Activated CD4-positive, alpha-beta T cell treated with anti-CD3 and anti-CD28 coated beads, Interleukin-2, amount 10 ng/mL, durations not matched to agents 24 days and 14 days (primary cell): ENCODE measurements at regions of chr1 and their contacts with region 1.

Region 1: DNA sequence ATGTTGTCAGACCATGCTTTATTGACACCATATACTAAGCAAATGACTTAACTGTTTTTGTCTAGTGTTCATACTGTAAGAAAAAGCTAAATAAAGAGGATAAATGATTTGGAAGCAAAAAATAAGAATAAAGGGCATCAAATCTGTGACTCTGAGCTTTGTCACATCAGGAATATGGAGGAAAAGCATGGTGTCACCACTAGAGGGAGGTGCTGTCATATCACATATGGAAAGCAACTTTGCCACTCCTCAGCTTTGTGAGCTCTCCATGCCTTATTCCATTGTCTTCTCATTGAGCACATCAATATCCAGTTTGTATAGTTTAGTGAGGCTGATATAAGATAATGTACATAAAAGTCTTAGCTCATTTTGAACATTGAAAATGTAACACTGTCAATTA is 20.8 kb upstream of the GBP1 start:
- DNase-seq: peak; percentile 89
- H3K4me3 Mint-ChIP-seq: no peak overlapping the region
- H3K27ac Mint-ChIP-seq: no peak overlapping the region
- H3K4me1 Mint-ChIP-seq: peaks cover 12% of the 10 kb centered on the region
- H3K27me3 Mint-ChIP-seq: no peaks in the 10 kb centered on the region

Region 2: GRCh38 chr1:88998716-88999115 is 87.1 kb before region 1 on chr1:
- intact Hi-C with region 1: loop called (anchors 1 kb)
- DNase-seq: peak; percentile 85
- H3K4me3 Mint-ChIP-seq: no peak overlapping the region
- H3K27ac Mint-ChIP-seq: no peak overlapping the region
- H3K4me1 Mint-ChIP-seq: peaks cover 30% of the 10 kb centered on the region
- H3K27me3 Mint-ChIP-seq: no peaks in the 10 kb centered on the region